ENCODE measurements at regions of chr2 and their contacts with region 1.

Region 1: DNA sequence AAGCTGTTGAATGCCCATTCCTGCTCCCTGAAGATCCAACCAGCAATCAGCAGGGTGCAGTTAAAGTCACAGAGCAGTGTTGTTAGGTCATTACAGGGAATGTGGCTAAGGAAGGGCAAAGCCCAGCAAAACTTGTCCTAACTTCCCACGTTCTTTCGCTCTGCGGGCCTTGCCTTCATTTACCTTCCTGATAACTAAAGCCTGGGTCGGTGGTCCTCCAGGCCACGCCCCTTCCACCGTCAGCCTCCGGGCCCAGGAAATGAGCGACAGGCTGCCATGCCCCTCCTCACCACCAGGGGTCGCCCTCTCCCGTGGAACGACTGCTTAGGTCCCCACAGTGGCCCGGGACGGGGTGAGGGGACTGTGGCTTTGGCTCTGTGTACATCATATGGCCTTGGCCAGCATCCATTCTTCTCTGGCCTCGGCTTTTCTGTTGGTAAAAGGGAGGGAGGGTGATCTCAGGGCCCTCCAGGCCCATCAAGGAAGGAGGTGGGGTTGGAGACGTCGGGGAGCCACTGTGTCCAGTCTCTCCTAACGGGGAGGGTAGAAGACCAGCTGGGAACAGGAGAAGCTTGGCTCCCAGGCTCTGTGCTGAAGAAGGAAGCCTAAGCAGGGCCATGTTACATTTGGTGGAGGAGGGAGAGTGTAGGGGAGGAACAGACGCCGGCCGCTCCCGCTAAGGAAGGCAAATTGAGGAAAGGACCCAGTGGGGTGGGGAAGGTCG is 2.2 kb downstream of the SH2D6 start:
- DNase-seq: peak; percentile 93 to 97
- ATAC-seq: peak; percentile 92
- H3K4me3 ChIP-seq: no peak overlapping the region
- H3K27ac ChIP-seq: peak overlapping the region in 1 of 2 donors; percentile 19
- H3K4me1 ChIP-seq: no peaks in the 10 kb centered on the region
- H3K27me3 ChIP-seq: no peaks in the 10 kb centered on the region

Region 2: GRCh38 chr2:85551698-85552678 is 131.3 kb after region 1 on chr2:
- intact Hi-C with region 1: loop called (anchors 1 kb)
- DNase-seq: peak; percentile 84 to 90
- ATAC-seq: peak; percentile 77
- H3K4me3 ChIP-seq: no peak overlapping the region
- H3K27ac ChIP-seq: no peak overlapping the region
- H3K4me1 ChIP-seq: no peaks in the 10 kb centered on the region
- H3K27me3 ChIP-seq: no peaks in the 10 kb centered on the region